Mammary epithelial cell (primary cell): ENCODE measurements at regions of chr17 and their contacts with region 1.

Region 1: DNA sequence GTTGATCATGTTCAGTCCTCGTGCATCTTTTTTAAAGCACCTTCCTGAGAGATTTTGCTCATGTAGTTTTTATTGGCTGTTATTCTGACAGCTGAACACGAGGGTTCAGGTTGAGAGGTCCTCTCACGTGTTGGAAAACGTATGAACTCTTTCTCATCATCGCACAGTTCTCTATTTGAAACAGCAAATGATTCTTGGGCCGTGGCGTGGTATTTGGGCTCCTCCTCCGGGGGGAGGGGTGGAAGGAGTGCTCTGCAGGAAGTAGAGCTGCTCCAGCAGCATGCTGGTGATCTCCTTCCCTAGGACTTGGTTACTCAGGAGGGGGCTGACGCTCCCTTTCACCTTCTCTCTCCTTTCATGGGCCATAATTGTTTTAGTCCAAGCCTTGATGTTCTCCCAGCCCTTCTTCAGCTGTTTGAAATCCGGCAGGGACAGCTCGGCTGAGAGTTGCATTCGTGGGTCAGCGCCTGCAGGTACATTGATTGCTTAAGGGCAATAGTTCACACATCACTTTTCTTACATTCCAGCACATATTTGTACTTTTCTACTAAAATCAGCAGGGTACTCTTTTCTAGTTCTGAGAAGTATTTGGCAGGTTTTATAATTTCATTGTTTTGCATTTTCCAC is 70.5 kb downstream of the KSR1 start:
- DNase-seq: no peak
- H3K4me3 ChIP-seq: no peak overlapping the region
- H3K27ac ChIP-seq: no peak overlapping the region
- H3K4me1 ChIP-seq: no peaks in the 10 kb centered on the region
- H3K27me3 ChIP-seq: peaks cover 3% of the 10 kb centered on the region
- CTCF ChIP-seq: no peak

Region 2: GRCh38 chr17:27091043-27091497 is 435.6 kb before region 1 on chr17:
- CTCF ChIA-PET with region 1: no interaction called
- dilution Hi-C with region 1: no loop called
- in situ Hi-C with region 1: loop called in 1 of 2 experiments (anchors 25 kb)
- intact Hi-C with region 1: no loop called
- DNase-seq: no peak
- H3K4me3 ChIP-seq: no peak overlapping the region
- H3K27ac ChIP-seq: no peak overlapping the region
- H3K4me1 ChIP-seq: no peaks in the 10 kb centered on the region
- H3K27me3 ChIP-seq: no peaks in the 10 kb centered on the region
- CTCF ChIP-seq: no peak

Region 3: GRCh38 chr17:27430882-27431491 is 95.7 kb before region 1 on chr17:
- CTCF ChIA-PET with region 1: no interaction called
- dilution Hi-C with region 1: no loop called
- in situ Hi-C with region 1: no loop called
- intact Hi-C with region 1: no loop called
- DNase-seq: peak; percentile 44
- H3K4me3 ChIP-seq: no peak overlapping the region
- H3K27ac ChIP-seq: no peak overlapping the region
- H3K4me1 ChIP-seq: peaks cover 5% of the 10 kb centered on the region
- H3K27me3 ChIP-seq: no peaks in the 10 kb centered on the region
- CTCF ChIP-seq: peak; percentile 84 to 91

Region 4: DNA sequence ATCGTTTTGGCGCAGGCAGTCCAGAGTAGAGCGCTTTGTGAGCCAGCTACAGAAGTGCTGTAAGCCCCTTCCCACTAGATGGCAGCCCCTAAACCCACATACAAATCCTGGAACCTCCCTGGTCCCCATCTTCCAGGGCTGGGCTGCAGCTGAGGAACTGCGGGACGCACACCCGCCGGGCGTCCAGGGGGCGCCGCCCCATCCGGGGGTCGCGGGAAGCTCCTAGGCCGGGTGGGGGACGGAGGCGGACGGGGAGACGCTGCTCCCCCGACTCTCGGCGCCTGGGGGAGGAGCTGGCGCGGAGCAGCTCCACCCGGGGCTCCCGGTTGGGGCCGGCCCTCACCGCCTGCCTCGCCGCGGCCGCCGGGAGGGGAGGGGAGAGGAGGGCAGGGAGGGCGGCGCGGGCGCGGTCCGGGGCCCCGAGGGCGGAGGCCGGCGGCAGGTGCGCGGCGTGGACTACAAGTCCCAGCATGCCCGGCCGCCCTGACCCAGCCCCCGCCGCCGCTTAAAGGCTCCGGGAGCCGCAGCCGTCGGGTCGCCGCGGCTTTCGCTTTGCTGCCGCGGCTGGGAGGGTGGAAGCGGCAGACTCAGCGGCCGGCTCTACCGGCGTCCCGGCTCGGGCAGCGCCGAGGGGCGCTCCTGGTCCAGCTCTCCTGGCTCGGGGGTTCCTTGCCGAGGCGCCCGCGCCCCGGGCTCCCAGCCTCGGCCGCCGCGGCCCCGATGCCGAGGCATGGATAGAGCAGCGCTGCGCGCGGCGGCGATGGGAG is 70.6 kb before region 1 on chr17 and contains the start of gene KSR1:
- CTCF ChIA-PET with region 1: no interaction called
- dilution Hi-C with region 1: no loop called
- in situ Hi-C with region 1: no loop called
- intact Hi-C with region 1: loop called (anchors 10 kb)
- DNase-seq: peak; percentile 47
- H3K4me3 ChIP-seq: peak within 1 kb of the TSS; percentile 49 to 62 (median 52)
- H3K27ac ChIP-seq: no peak within 1 kb of the TSS
- H3K4me1 ChIP-seq: peaks cover 11% of the 10 kb centered on the region
- H3K27me3 ChIP-seq: peaks cover 9% of the 10 kb centered on the region
- CTCF ChIP-seq: peak in 1 of 2 donors; percentile 29
- total RNA-seq, gene KSR1: 1.6 to 1.7 TPM

Region 5: DNA sequence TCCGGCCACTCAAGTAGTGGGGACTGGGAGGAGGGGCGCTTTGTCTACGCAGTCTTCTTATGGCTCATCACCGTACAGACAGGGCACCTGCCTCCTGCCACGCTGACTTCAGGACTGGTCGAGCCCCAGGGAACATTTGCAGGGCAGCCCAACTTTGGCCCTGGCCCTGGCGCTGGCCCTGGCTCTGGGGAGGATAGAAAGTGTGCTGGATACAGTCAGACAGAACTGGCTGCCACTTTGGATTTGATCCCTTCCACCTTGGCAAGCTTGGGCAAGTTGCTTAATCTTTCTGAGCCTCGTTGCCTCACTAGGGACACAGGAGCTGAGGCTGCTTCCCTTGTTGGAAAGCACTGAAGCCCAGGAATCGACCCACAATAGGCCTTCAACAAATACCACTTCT is 117.9 kb after region 1 on chr17:
- CTCF ChIA-PET with region 1: no interaction called
- dilution Hi-C with region 1: no loop called
- in situ Hi-C with region 1: no loop called
- intact Hi-C with region 1: no loop called
- DNase-seq: no peak
- H3K4me3 ChIP-seq: no peak overlapping the region
- H3K27ac ChIP-seq: no peak overlapping the region
- H3K4me1 ChIP-seq: no peaks in the 10 kb centered on the region
- H3K27me3 ChIP-seq: no peaks in the 10 kb centered on the region
- CTCF ChIP-seq: no peak

Region 6: DNA sequence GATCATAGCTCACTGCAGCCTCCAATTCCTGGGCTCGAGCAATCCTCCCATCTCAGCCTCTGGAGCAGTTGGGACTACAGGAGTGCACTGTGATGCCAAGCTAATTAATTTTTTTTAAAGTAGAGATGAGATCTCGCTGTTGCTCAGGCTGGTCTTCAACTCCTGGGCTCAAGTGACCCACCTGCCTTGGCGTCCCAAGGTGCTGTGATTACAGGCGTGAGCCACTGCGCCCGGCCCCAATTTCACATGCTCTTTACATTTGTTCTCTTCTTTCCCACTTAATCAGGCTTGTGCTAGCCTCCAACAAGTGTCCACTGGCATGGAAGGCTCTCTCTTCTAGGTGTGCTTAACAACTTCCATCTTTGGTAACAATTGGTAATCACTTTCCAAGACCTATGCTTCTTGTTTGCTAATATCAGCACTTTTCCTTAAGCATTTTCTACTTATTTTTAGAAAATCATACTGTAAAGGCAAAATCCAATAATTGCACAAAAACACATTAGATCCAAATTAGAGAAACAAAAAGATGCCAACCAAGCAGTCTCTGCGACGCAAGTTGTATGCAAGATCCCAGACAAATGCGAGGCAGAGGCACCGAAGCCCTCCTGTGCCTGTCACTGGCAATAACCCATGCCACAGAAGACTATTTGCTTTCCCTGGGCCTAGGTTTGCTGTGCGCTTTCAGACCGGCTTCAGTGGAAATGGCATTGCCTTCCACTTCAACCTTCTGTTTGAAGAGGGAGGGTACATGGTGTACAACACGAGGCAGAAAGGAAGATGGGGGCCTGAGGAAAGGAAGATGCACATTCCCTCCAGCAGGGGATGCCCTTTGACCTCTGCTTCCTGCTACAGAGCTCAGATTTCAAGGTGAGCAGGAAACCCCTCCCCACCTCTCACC is 221.0 kb after region 1 on chr17:
- CTCF ChIA-PET with region 1: no interaction called
- dilution Hi-C with region 1: no loop called
- in situ Hi-C with region 1: no loop called
- intact Hi-C with region 1: no loop called
- DNase-seq: no peak
- H3K4me3 ChIP-seq: no peak overlapping the region
- H3K27ac ChIP-seq: no peak overlapping the region
- H3K4me1 ChIP-seq: no peaks in the 10 kb centered on the region
- H3K27me3 ChIP-seq: no peaks in the 10 kb centered on the region
- CTCF ChIP-seq: peak; percentile 26 to 44

Region 7: DNA sequence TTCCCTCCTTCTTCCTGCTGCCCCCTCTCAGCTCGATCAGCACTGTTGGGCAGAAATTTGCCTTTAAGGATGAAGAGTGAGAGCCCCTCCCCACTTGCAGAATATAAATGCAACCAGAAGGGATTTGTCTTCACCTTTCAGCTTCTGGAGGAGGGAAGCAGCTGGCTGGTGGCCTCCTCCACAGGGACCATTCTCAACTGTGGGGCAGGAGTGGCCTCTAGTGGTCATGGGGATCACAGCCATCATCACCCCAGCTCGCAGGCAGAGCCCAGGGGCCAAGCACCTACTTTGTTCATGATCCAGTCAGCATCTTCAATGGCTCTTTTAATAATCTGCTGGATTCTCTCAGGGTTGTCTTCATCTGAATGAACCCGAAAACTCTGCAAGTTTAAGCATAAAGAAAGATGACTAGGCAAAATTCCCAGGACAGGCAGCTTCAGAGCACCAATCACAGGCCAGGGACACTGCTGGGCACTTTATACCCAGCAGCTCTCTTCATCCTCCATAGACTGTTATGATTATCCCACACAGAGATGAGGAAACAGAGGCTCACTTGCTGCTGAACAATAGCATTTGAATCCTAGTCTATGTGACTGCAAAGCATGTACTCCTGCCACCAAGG is 353.4 kb after region 1 on chr17:
- CTCF ChIA-PET with region 1: no interaction called
- dilution Hi-C with region 1: no loop called
- in situ Hi-C with region 1: no loop called
- intact Hi-C with region 1: no loop called
- DNase-seq: peak; percentile 48
- H3K4me3 ChIP-seq: no peak overlapping the region
- H3K27ac ChIP-seq: no peak overlapping the region
- H3K4me1 ChIP-seq: no peaks in the 10 kb centered on the region
- H3K27me3 ChIP-seq: no peaks in the 10 kb centered on the region
- CTCF ChIP-seq: peak; percentile 92 to 94